ENCODE measurements at regions of chr22 and their contacts with region 1.

Region 1: DNA sequence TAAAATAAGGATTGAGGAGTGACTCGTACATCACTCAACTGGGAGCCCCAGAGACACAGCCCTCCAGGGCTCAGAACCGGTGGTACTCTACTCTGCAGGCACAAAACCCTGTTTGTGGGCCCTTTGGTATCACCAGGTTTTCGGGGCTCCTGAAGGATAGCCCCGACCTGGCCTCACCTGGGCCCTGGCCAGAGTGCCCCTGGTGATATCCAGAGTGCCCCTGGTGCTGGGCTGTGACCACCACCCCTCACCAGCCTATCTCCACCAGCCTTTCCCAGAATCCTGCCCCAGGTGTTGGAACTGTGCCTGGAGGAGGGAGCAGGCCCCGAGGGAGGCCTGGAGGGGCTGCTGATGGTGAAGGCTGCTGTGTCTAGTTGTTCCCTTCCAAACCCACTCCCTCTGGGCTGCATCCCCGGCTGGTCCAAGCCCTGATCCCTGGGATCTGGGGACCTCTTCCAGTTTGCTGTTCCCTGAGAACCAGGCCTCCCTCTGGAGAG is 2.2 kb upstream of the GGT5 start:
- DNase-seq: no peak
- ATAC-seq: 0 out of 2 replicates have a peak, but pooled peaks have one; percentile 20
- H3K4me3 ChIP-seq: no peak overlapping the region
- H3K27ac ChIP-seq: no peak overlapping the region
- H3K4me1 ChIP-seq: peaks cover 6% of the 10 kb centered on the region
- H3K27me3 ChIP-seq: no peaks in the 10 kb centered on the region
- CTCF ChIP-seq: no peak

Region 2: DNA sequence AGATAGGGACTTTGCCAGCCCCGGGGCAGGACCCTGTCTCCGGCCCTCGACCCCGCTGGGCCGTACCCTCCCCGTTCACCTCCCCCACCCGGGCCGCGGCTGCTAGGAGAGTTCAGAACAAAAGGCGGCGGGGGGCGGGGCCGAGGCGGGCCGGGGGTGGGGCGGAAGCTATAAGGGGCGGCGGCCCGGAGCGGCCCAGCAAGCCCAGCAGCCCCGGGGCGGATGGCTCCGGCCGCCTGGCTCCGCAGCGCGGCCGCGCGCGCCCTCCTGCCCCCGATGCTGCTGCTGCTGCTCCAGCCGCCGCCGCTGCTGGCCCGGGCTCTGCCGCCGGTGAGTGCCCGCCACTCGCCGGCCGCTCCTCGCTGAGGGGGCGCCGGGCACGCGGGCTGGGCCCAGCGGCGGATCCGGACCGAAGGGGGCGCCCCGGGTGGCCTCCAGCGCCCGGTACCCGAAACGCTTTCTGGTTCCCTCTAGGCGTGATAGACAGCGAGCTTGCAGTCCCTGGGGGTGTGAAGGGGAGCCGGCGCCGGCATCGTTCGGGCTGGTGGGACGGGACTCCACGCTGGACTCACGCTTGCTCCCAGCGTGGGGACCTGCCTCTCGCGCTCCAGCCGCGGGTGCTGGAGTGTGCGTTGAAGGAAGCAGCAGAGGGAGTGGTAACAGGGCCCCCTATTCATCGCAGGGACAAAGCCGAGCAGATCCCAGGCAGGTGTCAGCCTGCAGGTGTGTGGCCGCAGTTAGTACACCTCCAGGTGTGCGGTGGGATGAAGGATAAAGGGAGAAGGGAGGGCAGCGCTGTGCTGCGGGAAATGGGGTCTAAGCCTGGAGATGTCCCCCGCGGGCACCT is 474.2 kb before region 1 on chr22 and contains the start of gene MMP11:
- CTCF ChIA-PET with region 1: no interaction called
- POLR2A ChIA-PET with region 1: no interaction called
- intact Hi-C with region 1: no loop called
- DNase-seq: peak; percentile 29
- ATAC-seq: peak; percentile 42
- H3K4me3 ChIP-seq: peak within 1 kb of the TSS; percentile 62
- H3K27ac ChIP-seq: no peak within 1 kb of the TSS
- H3K4me1 ChIP-seq: no peaks in the 10 kb centered on the region; the same call in 1 of the 2 replicates
- H3K27me3 ChIP-seq: no peaks in the 10 kb centered on the region
- CTCF ChIP-seq: no peak
- total RNA-seq, gene MMP11: 2.4 and 5.9 TPM in 2 replicates

Region 3: GRCh38 chr22:24189249-24190158 is 57.6 kb before region 1 on chr22:
- CTCF ChIA-PET with region 1: interaction called, 9 read pairs
- POLR2A ChIA-PET with region 1: no interaction called
- intact Hi-C with region 1: loop called (anchors 2 kb)
- DNase-seq: peak; percentile 69
- ATAC-seq: peak; percentile 91
- H3K4me3 ChIP-seq: no peak overlapping the region
- H3K27ac ChIP-seq: no peak overlapping the region
- H3K4me1 ChIP-seq: peaks cover 9% of the 10 kb centered on the region
- H3K27me3 ChIP-seq: no peaks in the 10 kb centered on the region
- CTCF ChIP-seq: peak; percentile 85

Region 4: DNA sequence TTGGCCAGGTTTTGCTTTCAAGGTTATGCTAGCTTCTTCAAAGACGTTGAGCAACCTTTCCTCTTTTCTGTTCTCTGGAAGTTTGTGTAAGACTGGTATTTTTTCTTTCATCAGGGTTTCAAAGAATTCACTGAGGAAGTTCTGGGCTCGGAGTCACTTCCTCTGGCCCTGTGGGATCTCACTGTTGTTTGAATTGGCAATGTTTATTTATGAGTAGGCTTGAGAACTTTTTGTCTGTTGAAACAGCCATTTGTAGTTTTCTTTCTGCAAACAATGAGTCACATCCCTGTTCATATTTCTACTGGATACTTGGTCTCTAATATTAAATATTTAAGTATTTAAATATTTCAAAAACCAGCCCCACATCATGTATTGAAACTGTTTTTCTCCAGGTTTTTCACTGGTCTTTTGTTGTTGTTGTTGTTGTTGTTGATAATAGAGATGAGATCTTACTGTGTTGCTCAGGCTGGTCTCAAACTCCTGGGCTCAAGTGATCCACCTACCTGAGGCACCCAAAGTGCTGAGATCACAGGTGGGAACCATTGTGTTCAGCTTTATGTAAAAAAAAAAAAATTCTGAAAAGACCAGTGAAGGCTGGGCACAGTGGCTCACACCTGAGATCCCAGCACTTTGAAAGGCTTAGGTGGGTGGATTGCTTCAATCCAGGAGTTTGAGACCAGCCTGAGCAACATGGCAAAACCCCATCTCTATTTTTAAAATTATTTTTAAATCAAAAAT is 38.9 kb before region 1 on chr22:
- CTCF ChIA-PET with region 1: no interaction called
- POLR2A ChIA-PET with region 1: no interaction called
- intact Hi-C with region 1: loop called (anchors 5 kb)
- DNase-seq: peak; percentile 95
- ATAC-seq: peak; percentile 87
- H3K4me3 ChIP-seq: peak overlapping the region; percentile 41; the same call in 1 of the 2 replicates
- H3K27ac ChIP-seq: peak overlapping the region; percentile 98
- H3K4me1 ChIP-seq: peaks cover 51% of the 10 kb centered on the region
- H3K27me3 ChIP-seq: no peaks in the 10 kb centered on the region
- CTCF ChIP-seq: no peak

Region 5: DNA sequence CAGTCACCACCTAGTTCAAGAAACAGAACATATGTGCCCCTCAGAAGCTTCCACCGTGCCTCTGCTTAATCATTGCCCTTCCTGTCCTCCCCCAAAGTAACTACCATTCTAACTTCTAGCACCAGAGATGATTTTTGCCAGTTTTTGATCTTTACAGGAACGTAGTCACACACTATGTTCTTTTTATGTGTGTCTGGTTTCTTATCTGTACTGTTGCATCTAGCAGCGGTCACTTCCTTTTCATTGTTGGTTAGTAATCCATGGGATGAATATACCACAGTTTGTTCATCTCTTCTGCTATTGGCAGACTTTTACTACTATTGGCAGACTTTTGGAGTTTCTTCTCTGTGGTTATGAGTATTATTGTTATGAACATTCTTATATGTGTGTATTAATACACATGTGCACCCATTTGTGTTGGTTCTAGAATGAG is 58.2 kb after region 1 on chr22:
- CTCF ChIA-PET with region 1: no interaction called
- POLR2A ChIA-PET with region 1: no interaction called
- intact Hi-C with region 1: no loop called
- DNase-seq: peak; percentile 62
- ATAC-seq: peak; percentile 54
- H3K4me3 ChIP-seq: peak overlapping the region; percentile 15; the same call in 1 of the 2 replicates
- H3K27ac ChIP-seq: peak overlapping the region; percentile 54
- H3K4me1 ChIP-seq: peaks cover 39% of the 10 kb centered on the region
- H3K27me3 ChIP-seq: no peaks in the 10 kb centered on the region
- CTCF ChIP-seq: no peak

Region 6: DNA sequence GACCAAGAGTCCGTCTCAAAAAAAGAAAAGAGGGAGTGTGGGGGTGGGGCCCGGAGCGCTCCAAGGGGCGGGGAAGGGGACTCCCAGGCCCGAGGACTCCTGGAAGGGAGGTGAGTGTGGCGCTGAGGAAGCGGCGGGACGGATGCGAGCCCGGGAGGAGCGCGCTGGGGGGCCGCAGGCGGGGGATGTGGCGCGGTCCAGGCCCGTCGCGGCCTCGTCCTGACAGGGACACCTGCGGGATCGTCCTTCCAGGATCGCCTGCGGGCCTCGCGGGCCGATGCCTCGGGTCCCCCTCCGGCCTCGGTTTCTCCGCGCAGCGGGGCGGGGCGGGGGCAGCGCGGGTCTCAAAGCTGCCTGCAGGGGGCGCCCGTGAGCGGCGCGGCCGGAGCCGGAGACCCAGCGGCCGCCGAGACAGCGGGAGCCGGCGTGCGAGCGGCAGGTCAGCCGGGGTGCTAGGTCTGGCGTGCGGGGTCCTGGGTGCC is 176.5 kb after region 1 on chr22:
- CTCF ChIA-PET with region 1: no interaction called
- POLR2A ChIA-PET with region 1: no interaction called
- intact Hi-C with region 1: no loop called
- DNase-seq: peak; percentile 34
- ATAC-seq: peak; percentile 67
- H3K4me3 ChIP-seq: peak overlapping the region; percentile 61
- H3K27ac ChIP-seq: no peak overlapping the region
- H3K4me1 ChIP-seq: no peaks in the 10 kb centered on the region
- H3K27me3 ChIP-seq: no peaks in the 10 kb centered on the region
- CTCF ChIP-seq: peak; percentile 63